Sigmoid colon (tissue), 7 donors: ENCODE measurements at regions of chr5 and their contacts with region 1.

Region 1: GRCh38 chr5:107425541-107426256 is 245.0 kb downstream of the EFNA5 start:
- DNase-seq: no peak
- H3K4me3 ChIP-seq: no peak overlapping the region
- H3K27ac ChIP-seq: peak overlapping the region in 2 of 4 donors; percentile 11
- H3K4me1 ChIP-seq: no peaks in the 10 kb centered on the region
- H3K27me3 ChIP-seq: no peaks in the 10 kb centered on the region
- CTCF ChIP-seq: no peak
- EP300 ChIP-seq: no peak
- POLR2A ChIP-seq: no peak

Region 2: DNA sequence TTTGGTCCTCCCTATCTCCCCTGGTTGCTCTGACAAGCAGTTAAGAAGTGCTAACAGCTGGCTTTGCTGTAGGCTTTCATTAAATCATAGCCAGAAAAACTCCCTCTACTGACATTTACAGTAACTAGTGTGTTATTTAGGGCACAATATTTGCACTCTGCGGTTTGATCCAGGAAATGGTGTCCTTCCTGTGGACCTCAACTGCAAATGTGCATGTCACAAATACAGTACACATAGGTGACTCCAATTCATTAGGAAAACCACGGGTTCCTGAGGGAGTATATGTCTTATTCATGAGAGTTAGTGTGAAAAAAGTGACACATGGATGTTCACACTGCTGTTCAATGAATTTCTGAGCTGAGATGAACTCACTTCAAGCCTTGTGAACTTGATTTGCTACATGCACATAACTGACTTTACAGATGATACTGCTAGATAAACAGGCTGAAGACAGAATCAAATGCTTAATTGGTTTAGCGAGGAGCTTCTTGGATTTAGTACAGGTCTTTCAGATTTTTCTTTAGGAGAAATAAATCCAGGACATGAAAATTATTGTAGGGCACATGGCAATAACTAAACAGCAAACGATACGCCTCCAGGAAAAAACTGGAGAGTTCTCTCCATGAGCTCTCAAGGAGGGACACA is 36.4 kb before region 1 on chr5:
- intact Hi-C with region 1: no loop called
- DNase-seq: no peak
- H3K4me3 ChIP-seq: no peak overlapping the region
- H3K27ac ChIP-seq: peak overlapping the region in 2 of 4 donors; percentile 3 to 11
- H3K4me1 ChIP-seq: peaks cover 0 to 20% (median 14%) of the 10 kb centered on the region in 4 donors
- H3K27me3 ChIP-seq: no peaks in the 10 kb centered on the region
- CTCF ChIP-seq: no peak
- EP300 ChIP-seq: no peak
- POLR2A ChIP-seq: no peak

Region 3: GRCh38 chr5:107571621-107572536 is 146.2 kb after region 1 on chr5:
- intact Hi-C with region 1: loop called (anchors 10 kb)
- DNase-seq: peak; percentile 96
- H3K4me3 ChIP-seq: peak overlapping the region; percentile 34 to 52 (median 49)
- H3K27ac ChIP-seq: peak overlapping the region; percentile 57 to 70 (median 64)
- H3K4me1 ChIP-seq: peaks cover 0 to 14% (median 11%) of the 10 kb centered on the region in 4 donors
- H3K27me3 ChIP-seq: no peaks in the 10 kb centered on the region
- CTCF ChIP-seq: peak; percentile 74 to 93 (median 88)
- EP300 ChIP-seq: no peak
- POLR2A ChIP-seq: peak in 1 of 2 donors; percentile 15

Region 4: GRCh38 chr5:108295578-108296368 is 870.1 kb after region 1 on chr5:
- intact Hi-C with region 1: no loop called
- DNase-seq: no peak
- H3K4me3 ChIP-seq: no peak overlapping the region
- H3K27ac ChIP-seq: no peak overlapping the region
- H3K4me1 ChIP-seq: no peaks in the 10 kb centered on the region
- H3K27me3 ChIP-seq: no peaks in the 10 kb centered on the region
- CTCF ChIP-seq: no peak
- EP300 ChIP-seq: no peak
- POLR2A ChIP-seq: no peak